Sciatic nerve (tissue), 2 donors: ENCODE measurements at regions of chr5 and their contacts with region 1.

Region 1: GRCh38 chr5:15510831-15511230 is 10.9 kb downstream of the FBXL7 start:
- DNase-seq: no peak
- ATAC-seq: peak; percentile 62

Region 2: DNA sequence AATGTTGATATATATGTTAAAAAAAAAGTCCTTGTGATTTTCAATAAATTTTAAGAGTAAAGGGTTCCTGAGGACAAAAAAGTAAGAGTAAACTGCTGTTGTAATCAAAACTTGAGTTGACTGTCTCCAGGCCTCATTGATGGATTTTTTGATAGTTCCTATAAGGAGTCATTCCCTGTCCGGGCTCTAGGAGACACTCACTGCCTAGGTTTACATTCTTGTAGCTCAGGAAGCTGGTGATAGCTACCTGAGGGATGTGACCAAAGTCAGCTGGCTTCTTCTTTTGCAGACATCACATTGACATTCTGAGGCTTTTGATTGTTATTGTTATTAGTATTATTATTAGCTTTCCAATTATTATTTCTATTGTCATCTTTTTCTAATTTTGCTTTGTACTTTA is 127.4 kb before region 1 on chr5:
- intact Hi-C with region 1: loop called (anchors 10 kb)
- DNase-seq: no peak
- ATAC-seq: peak; percentile 66

Region 3: GRCh38 chr5:15421921-15422412 is 88.9 kb before region 1 on chr5:
- intact Hi-C with region 1: no loop called
- DNase-seq: no peak
- ATAC-seq: peak; percentile 95